ENCODE measurements at regions of chr2 and their contacts with region 1.

Region 1: DNA sequence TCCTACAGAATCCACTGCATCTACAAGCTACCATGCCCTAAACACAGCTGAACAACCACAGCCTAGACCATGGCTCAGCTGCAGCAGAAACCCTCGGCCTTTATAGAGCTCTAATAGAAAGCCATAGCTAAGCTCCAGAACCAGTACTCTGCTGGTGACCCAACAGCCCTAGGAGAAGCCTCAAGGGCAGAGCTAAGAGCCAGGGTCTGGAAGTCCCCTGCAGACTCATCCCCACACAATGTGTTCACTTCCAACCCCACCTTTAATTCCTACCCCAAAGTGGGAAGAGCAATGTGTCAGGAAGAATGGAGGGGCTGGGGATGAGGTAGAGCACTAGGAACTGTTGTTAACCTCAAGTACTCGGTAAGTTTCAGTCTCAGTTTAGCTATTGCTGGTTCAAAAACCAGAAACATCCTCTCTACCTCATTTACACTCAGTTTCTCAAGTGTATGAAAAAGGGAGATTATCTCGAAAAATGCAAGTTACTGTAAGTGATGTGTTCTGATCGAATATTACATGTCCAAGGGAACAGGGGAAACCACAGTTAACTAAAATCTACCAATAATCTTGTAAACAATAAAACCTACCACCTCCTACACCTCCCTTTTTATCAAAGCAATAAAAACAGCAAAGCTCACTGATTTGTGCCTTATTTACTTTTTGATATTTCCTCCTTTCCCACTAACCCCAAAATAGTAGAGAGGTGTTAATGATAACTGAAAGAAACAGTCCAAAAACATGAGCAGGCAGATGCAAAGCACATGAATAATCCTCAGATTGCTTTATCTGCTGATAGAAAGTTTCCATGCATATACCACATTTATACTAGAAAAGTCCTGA is 36.2 kb downstream of the THADA start:
- DNase-seq: peak; percentile 47
- ATAC-seq: peak; percentile 84
- H3K4me3 Mint-ChIP-seq: peak overlapping the region; percentile 48
- H3K27ac Mint-ChIP-seq: peak overlapping the region; percentile 86
- H3K4me1 Mint-ChIP-seq: peaks cover 58% of the 10 kb centered on the region
- H3K27me3 Mint-ChIP-seq: no peaks in the 10 kb centered on the region

Region 2: GRCh38 chr2:43461453-43462073 is 98.0 kb before region 1 on chr2:
- CTCF ChIA-PET with region 1: no interaction called
- DNase-seq: no peak
- ATAC-seq: no peak
- H3K4me3 Mint-ChIP-seq: no peak overlapping the region
- H3K27ac Mint-ChIP-seq: peak overlapping the region; percentile 15
- H3K4me1 Mint-ChIP-seq: peaks cover 32% of the 10 kb centered on the region
- H3K27me3 Mint-ChIP-seq: no peaks in the 10 kb centered on the region

Region 3: GRCh38 chr2:43569921-43570320 is 10.3 kb after region 1 on chr2:
- CTCF ChIA-PET with region 1: interaction called, 15 read pairs
- DNase-seq: peak; percentile 80
- ATAC-seq: peak; percentile 89
- H3K4me3 Mint-ChIP-seq: peak overlapping the region; percentile 57
- H3K27ac Mint-ChIP-seq: peak overlapping the region; percentile 90
- H3K4me1 Mint-ChIP-seq: peaks cover 65% of the 10 kb centered on the region
- H3K27me3 Mint-ChIP-seq: no peaks in the 10 kb centered on the region

Region 4: GRCh38 chr2:43576981-43577892 is 17.6 kb after region 1 on chr2:
- CTCF ChIA-PET with region 1: interaction called, 27 read pairs
- DNase-seq: no peak
- ATAC-seq: no peak
- H3K4me3 Mint-ChIP-seq: no peak overlapping the region
- H3K27ac Mint-ChIP-seq: peak overlapping the region; percentile 24
- H3K4me1 Mint-ChIP-seq: peaks cover 34% of the 10 kb centered on the region
- H3K27me3 Mint-ChIP-seq: no peaks in the 10 kb centered on the region

Region 5: GRCh38 chr2:43634604-43635306 is 75.1 kb after region 1 on chr2:
- CTCF ChIA-PET with region 1: no interaction called
- DNase-seq: no peak
- ATAC-seq: no peak
- H3K4me3 Mint-ChIP-seq: no peak overlapping the region
- H3K27ac Mint-ChIP-seq: no peak overlapping the region
- H3K4me1 Mint-ChIP-seq: peaks cover 15% of the 10 kb centered on the region
- H3K27me3 Mint-ChIP-seq: peaks cover 70% of the 10 kb centered on the region

Region 6: GRCh38 chr2:43657241-43657640 is 97.6 kb after region 1 on chr2:
- CTCF ChIA-PET with region 1: no interaction called
- DNase-seq: no peak
- ATAC-seq: no peak
- H3K4me3 Mint-ChIP-seq: no peak overlapping the region
- H3K27ac Mint-ChIP-seq: no peak overlapping the region
- H3K4me1 Mint-ChIP-seq: no peaks in the 10 kb centered on the region
- H3K27me3 Mint-ChIP-seq: peaks cover 16% of the 10 kb centered on the region

Measured in activated CD8-positive, alpha-beta memory T cell treated with anti-CD3 and anti-CD28 coated beads, Interleukin-2, amount 10 ng/mL, durations not matched to agents 7 days and 5 days (primary cell).